H1 (cell line): ENCODE measurements at regions of chr6 and their contacts with region 1.

Region 1: DNA sequence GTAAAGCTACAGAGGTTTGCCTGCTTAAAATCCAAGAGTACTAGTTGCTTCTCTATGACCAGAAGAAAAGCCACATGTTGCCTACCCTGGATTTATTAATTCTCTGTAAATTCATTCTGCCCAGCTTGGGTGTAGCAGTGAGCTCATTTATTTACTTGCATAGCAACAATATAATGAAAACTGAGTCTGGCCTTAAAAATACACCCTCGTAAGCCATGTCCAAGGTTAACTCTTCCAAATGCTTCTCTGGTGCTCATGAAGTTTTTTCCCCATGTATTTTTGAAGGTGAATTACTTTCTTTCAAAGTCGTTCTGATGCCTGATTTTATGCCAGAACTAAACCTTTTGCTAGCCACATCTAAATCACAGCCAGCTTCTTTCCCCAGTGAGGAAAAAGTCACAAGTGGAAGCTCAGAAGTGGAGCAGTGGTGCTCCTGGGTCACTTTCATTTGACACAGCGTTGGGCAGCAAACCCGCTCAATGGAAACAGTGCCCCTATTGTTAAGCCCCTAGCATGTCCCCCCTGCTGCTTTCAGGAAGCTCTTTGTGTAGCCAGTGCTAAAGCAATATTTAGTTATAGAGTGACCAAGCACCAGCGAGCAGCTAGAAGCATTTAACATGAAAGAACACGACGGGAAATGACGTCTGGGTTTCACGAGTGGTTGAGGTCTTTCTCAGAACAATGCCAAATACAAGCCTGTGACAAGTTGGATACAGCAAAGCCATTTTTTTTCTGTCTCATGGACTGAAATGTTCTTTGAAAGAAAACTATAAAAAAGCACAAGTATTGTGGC is 29.8 kb downstream of the NEDD9 start:
- DNase-seq: no peak
- H3K4me3 ChIP-seq: no peak overlapping the region; a peak in 1 of 8 replicates
- H3K27ac ChIP-seq: no peak overlapping the region
- H3K4me1 ChIP-seq: peaks cover 5 to 18% (median 13%) of the 10 kb centered on the region in 4 experiments; a peak in 4 of 7 replicates
- H3K27me3 ChIP-seq: no peaks in the 10 kb centered on the region; a peak in 1 of 7 replicates
- CTCF ChIP-seq: no peak
- EP300 ChIP-seq: no peak
- POLR2A ChIP-seq: no peak
- RAD21 ChIP-seq: no peak

Region 2: GRCh38 chr6:11217360-11218101 is 14.8 kb after region 1 on chr6:
- CTCF ChIA-PET with region 1: interaction called, 10 read pairs
- POLR2A ChIA-PET with region 1: no interaction called
- DNase-seq: no peak
- H3K4me3 ChIP-seq: no peak overlapping the region
- H3K27ac ChIP-seq: no peak overlapping the region
- H3K4me1 ChIP-seq: peaks cover 0 to 5% (median 2%) of the 10 kb centered on the region in 4 experiments; a peak in 5 of 7 replicates
- H3K27me3 ChIP-seq: no peaks in the 10 kb centered on the region; a peak in 1 of 7 replicates
- CTCF ChIP-seq: no peak
- EP300 ChIP-seq: no peak
- POLR2A ChIP-seq: no peak
- RAD21 ChIP-seq: no peak

Region 3: GRCh38 chr6:11350294-11350969 is 147.7 kb after region 1 on chr6:
- CTCF ChIA-PET with region 1: no interaction called
- POLR2A ChIA-PET with region 1: no interaction called
- DNase-seq: no peak
- H3K4me3 ChIP-seq: no peak overlapping the region
- H3K27ac ChIP-seq: no peak overlapping the region
- H3K4me1 ChIP-seq: no peaks in the 10 kb centered on the region
- H3K27me3 ChIP-seq: no peaks in the 10 kb centered on the region
- CTCF ChIP-seq: no peak
- EP300 ChIP-seq: no peak
- POLR2A ChIP-seq: no peak
- RAD21 ChIP-seq: no peak